ENCODE measurements at regions of chr6 and their contacts with region 1.

Region 1: GRCh38 chr6:118776607-118777549 is 117.1 kb upstream of the ASF1A start:
- DNase-seq: no peak
- ATAC-seq: peak; percentile 82
- H3K4me3 Mint-ChIP-seq: no peak overlapping the region
- H3K27ac Mint-ChIP-seq: no peak overlapping the region
- H3K4me1 Mint-ChIP-seq: peaks cover 5% of the 10 kb centered on the region
- H3K27me3 Mint-ChIP-seq: peaks cover 3% of the 10 kb centered on the region
- CTCF ChIP-seq: peak; percentile 73

Region 2: DNA sequence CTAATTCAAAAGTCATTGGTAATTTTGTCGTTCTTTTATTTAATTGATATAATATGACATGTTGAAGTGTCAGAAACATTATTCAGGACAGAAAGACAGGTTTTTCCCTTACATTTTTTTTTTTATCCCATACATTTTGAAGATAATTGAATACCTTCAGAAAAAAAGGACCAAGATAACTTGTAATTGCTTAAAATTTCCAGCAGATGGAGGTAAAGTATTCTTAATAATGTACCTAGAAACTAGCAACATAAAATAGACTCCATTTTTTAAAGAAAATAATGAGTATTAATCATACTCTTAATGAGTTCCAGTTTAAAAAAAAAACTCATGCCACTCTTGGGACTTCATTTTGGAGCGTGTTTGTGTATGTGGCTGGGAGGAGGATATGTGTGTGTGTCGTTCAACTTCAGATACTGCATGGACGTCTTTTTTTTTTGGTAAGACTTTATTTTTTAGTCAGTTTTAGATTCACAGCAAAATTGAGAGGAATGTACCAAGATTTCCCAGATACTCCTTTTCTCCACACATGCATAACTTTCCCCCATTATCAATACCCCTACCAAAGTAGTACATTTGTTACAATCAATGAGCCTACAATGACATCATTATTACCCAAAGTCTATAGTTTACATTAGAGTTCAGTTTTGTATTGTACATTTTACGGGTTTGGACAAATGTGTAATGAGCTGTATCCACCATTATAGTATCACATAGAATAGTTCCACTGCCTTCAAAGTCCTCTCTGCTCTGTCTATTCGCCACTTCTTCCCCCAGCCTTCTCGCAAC is 1430.5 kb before region 1 on chr6:
- CTCF ChIA-PET with region 1: no interaction called
- POLR2A ChIA-PET with region 1: no interaction called
- intact Hi-C with region 1: loop called (anchors 10 kb)
- DNase-seq: no peak
- ATAC-seq: no peak
- H3K4me3 Mint-ChIP-seq: no peak overlapping the region
- H3K27ac Mint-ChIP-seq: no peak overlapping the region
- H3K4me1 Mint-ChIP-seq: no peaks in the 10 kb centered on the region
- H3K27me3 Mint-ChIP-seq: peaks cover 1% of the 10 kb centered on the region
- CTCF ChIP-seq: no peak

Region 3: GRCh38 chr6:118618679-118619377 is 158.1 kb before region 1 on chr6:
- CTCF ChIA-PET with region 1: interaction called, 3 read pairs
- POLR2A ChIA-PET with region 1: no interaction called
- intact Hi-C with region 1: loop called (anchors 1 kb)
- DNase-seq: peak; percentile 41
- ATAC-seq: peak; percentile 93
- H3K4me3 Mint-ChIP-seq: no peak overlapping the region
- H3K27ac Mint-ChIP-seq: no peak overlapping the region
- H3K4me1 Mint-ChIP-seq: peaks cover 19% of the 10 kb centered on the region
- H3K27me3 Mint-ChIP-seq: no peaks in the 10 kb centered on the region
- CTCF ChIP-seq: no peak

Region 4: DNA sequence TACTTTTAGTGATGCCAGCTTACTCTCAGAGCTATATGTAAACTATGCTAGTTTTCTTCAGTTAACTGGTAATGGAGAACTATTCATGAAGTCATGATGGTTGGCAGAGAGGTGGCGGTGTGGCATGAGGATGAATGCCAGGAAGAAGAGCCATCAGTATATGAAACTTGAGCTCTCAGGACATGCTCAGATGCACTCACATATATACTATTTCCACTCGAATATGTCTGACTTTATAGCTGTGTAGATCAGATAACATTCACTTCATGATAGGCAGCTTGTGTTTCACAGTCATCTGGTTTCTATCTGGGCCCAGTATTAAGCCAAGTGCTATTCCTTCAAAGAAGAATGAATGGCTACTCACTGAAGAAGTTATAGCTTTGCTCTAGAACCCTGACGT is 79.3 kb before region 1 on chr6:
- CTCF ChIA-PET with region 1: interaction called, 4 read pairs
- POLR2A ChIA-PET with region 1: no interaction called
- intact Hi-C with region 1: loop called (anchors 1 kb)
- DNase-seq: no peak
- ATAC-seq: no peak
- H3K4me3 Mint-ChIP-seq: no peak overlapping the region
- H3K27ac Mint-ChIP-seq: no peak overlapping the region
- H3K4me1 Mint-ChIP-seq: peaks cover 55% of the 10 kb centered on the region
- H3K27me3 Mint-ChIP-seq: no peaks in the 10 kb centered on the region
- CTCF ChIP-seq: no peak

Region 5: DNA sequence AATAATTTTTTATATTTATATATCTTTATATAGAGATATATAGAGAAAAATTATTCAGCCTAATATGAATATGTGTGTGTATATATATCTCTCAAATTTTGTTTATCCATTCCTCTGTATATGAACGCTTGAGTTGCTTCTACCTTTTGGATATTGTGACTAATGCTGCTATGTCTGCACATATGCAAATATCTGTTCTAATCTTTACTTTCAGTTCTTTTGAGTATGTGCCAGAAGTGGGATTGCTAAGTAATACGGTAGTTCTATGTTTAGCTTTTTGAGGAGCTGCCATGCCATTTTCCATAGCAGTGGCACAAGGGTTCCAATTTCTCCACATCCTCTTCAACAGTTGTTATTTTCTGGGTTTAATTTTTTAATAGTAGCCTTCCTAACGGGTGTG is 52.7 kb before region 1 on chr6:
- CTCF ChIA-PET with region 1: no interaction called
- POLR2A ChIA-PET with region 1: no interaction called
- intact Hi-C with region 1: no loop called
- DNase-seq: no peak
- ATAC-seq: peak; percentile 74
- H3K4me3 Mint-ChIP-seq: peak overlapping the region; percentile 55
- H3K27ac Mint-ChIP-seq: peak overlapping the region; percentile 80
- H3K4me1 Mint-ChIP-seq: peaks cover 64% of the 10 kb centered on the region
- H3K27me3 Mint-ChIP-seq: no peaks in the 10 kb centered on the region
- CTCF ChIP-seq: no peak

Region 6: GRCh38 chr6:118800394-118801071 is 23.7 kb after region 1 on chr6:
- CTCF ChIA-PET with region 1: no interaction called
- POLR2A ChIA-PET with region 1: no interaction called
- intact Hi-C with region 1: loop called (anchors 2 kb)
- DNase-seq: peak; percentile 34
- ATAC-seq: peak; percentile 91
- H3K4me3 Mint-ChIP-seq: peak overlapping the region; percentile 52
- H3K27ac Mint-ChIP-seq: no peak overlapping the region
- H3K4me1 Mint-ChIP-seq: peaks cover 25% of the 10 kb centered on the region
- H3K27me3 Mint-ChIP-seq: no peaks in the 10 kb centered on the region
- CTCF ChIP-seq: peak; percentile 25